ENCODE measurements at regions of chr21 and their contacts with region 1.

Region 1: GRCh38 chr21:33441489-33442477 is 38.0 kb downstream of the TMEM50B start:
- DNase-seq: no peak
- ATAC-seq: no peak
- H3K4me3 ChIP-seq: no peak overlapping the region
- H3K4me3 Mint-ChIP-seq: no peak overlapping the region
- H3K27ac ChIP-seq: no peak overlapping the region
- H3K27ac Mint-ChIP-seq: no peak overlapping the region
- H3K4me1 ChIP-seq: no peaks in the 10 kb centered on the region
- H3K4me1 Mint-ChIP-seq: peaks cover 4 to 16% (median 7%) of the 10 kb centered on the region in 3 donors
- H3K27me3 ChIP-seq: no peaks in the 10 kb centered on the region
- H3K27me3 Mint-ChIP-seq: no peaks in the 10 kb centered on the region

Region 2: DNA sequence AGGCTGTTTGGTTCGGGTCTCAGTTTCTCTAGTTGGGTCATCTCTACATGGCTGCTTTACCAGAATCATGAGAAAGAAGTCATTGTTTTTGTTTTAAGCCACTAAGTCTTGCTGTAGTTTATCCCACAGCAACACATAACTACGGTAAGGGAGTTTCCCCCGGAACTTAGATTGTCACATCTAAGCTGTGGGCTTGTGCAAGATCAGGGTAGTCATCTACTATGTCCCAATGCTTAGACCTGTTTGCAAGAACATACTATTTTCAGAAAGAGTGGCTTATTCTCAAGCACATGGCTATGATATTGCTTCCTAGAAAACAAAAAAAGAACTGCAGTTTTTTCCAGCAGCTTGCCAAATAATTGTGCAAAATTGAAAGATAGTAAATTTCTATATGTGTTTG is 434.0 kb before region 1 on chr21:
- CTCF ChIA-PET with region 1: interaction called in 1 of 2 experiments, 11 read pairs
- POLR2A ChIA-PET with region 1: interaction called in 1 of 2 experiments, 7 read pairs
- DNase-seq: no peak
- ATAC-seq: no peak
- H3K4me3 ChIP-seq: no peak overlapping the region
- H3K4me3 Mint-ChIP-seq: no peak overlapping the region
- H3K27ac ChIP-seq: no peak overlapping the region
- H3K27ac Mint-ChIP-seq: no peak overlapping the region
- H3K4me1 ChIP-seq: no peaks in the 10 kb centered on the region
- H3K4me1 Mint-ChIP-seq: no peaks in the 10 kb centered on the region
- H3K27me3 ChIP-seq: peaks cover 0 to 20% of the 10 kb centered on the region in 2 experiments
- H3K27me3 Mint-ChIP-seq: peaks cover 15 to 25% of the 10 kb centered on the region in 2 donors

Region 3: GRCh38 chr21:33199516-33200217 is 242.1 kb before region 1 on chr21:
- CTCF ChIA-PET with region 1: interaction called, 10 to 45 read pairs
- POLR2A ChIA-PET with region 1: no interaction called
- DNase-seq: peak; percentile 47 to 93 (median 79)
- ATAC-seq: peak; percentile 85 to 94 (median 92)
- H3K4me3 ChIP-seq: no peak overlapping the region
- H3K4me3 Mint-ChIP-seq: no peak overlapping the region
- H3K27ac ChIP-seq: peak overlapping the region; percentile 8
- H3K27ac Mint-ChIP-seq: peak overlapping the region; percentile 48 to 57
- H3K4me1 ChIP-seq: peaks cover 6 to 15% of the 10 kb centered on the region in 2 experiments
- H3K4me1 Mint-ChIP-seq: peaks cover 41 to 60% (median 46%) of the 10 kb centered on the region in 3 donors
- H3K27me3 ChIP-seq: peaks cover 0 to 3% of the 10 kb centered on the region in 2 experiments
- H3K27me3 Mint-ChIP-seq: peaks cover 0 to 5% of the 10 kb centered on the region in 2 donors

Region 4: GRCh38 chr21:33212159-33212851 is 229.5 kb before region 1 on chr21:
- CTCF ChIA-PET with region 1: interaction called in 1 of 2 experiments, 10 read pairs
- POLR2A ChIA-PET with region 1: no interaction called
- DNase-seq: peak in 8 of 35 experiments; percentile 16 to 49 (median 31)
- ATAC-seq: peak; percentile 36 to 62 (median 43)
- H3K4me3 ChIP-seq: no peak overlapping the region
- H3K4me3 Mint-ChIP-seq: peak overlapping the region; percentile 39 to 61 (median 46)
- H3K27ac ChIP-seq: peak overlapping the region; percentile 45
- H3K27ac Mint-ChIP-seq: peak overlapping the region; percentile 92 to 95
- H3K4me1 ChIP-seq: peaks cover 60 to 69% of the 10 kb centered on the region in 2 experiments
- H3K4me1 Mint-ChIP-seq: peaks cover 84 to 87% (median 84%) of the 10 kb centered on the region in 3 donors
- H3K27me3 ChIP-seq: no peaks in the 10 kb centered on the region
- H3K27me3 Mint-ChIP-seq: no peaks in the 10 kb centered on the region

Region 5: DNA sequence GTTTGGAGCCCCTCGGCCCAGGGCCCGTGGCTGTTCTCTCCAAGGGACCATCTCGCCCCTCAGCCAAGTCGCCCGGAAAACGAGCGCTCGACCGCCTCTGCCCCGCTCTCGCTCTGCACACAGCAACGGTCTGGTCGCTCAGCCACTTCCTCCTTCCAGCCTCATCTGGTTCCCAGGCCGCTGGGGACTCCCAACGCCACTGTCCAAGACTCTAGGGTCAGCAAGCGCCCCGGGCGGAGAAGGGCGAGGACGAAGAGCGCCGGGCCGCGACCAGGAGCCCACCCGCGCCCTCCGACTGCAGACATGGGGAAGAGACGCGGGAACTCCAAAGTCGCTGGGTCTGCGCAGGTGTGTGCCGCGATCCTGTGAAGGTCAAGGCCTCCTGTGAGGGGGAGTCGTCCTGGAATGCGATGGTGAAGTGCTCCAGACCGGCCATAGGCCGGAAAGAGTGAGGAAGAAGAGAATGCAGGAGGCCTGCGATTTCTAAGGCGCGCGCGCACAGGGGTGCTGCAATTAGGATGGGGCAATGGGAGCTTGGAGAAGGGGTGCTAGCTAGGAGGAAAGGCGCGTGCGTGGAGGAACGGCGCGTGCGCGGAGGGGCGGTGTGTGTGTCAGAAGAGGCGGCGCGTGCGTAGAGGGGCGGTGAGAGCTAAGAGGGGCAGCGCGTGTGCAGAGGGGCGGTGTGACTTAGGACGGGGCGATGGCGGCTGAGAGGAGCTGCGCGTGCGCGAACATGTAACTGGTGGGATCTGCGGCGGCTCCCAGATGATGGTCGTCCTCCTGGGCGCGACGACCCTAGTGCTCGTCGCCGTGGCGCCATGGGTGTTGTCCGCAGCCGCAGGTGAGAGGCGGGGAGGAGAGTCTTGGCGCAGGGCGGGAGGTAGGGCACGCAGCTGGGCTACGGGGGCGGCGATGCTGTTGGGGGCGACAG is 117.2 kb before region 1 on chr21 and contains the start of gene IFNAR1:
- CTCF ChIA-PET with region 1: interaction called, 6 to 11 read pairs
- POLR2A ChIA-PET with region 1: no interaction called
- DNase-seq: peak; percentile 94 to 100 (median 98)
- ATAC-seq: peak; percentile 88 to 94 (median 91)
- H3K4me3 ChIP-seq: peak within 1 kb of the TSS; percentile 67 to 97
- H3K4me3 Mint-ChIP-seq: no peak within 1 kb of the TSS
- H3K27ac ChIP-seq: peak within 1 kb of the TSS; percentile 92
- H3K27ac Mint-ChIP-seq: no peak within 1 kb of the TSS
- H3K4me1 ChIP-seq: peaks cover 19 to 23% of the 10 kb centered on the region in 2 experiments
- H3K4me1 Mint-ChIP-seq: peaks cover 29 to 32% (median 30%) of the 10 kb centered on the region in 3 donors
- H3K27me3 ChIP-seq: no peaks in the 10 kb centered on the region
- H3K27me3 Mint-ChIP-seq: no peaks in the 10 kb centered on the region
- total RNA-seq, gene IFNAR1: 22.1 to 51.1 (median 45.6) TPM

Region 6: GRCh38 chr21:33348706-33349105 is 93.1 kb before region 1 on chr21:
- CTCF ChIA-PET with region 1: interaction called, 6 to 10 read pairs
- POLR2A ChIA-PET with region 1: interaction called in 1 of 2 experiments, 4 read pairs
- DNase-seq: no peak
- ATAC-seq: no peak
- H3K4me3 ChIP-seq: no peak overlapping the region
- H3K4me3 Mint-ChIP-seq: no peak overlapping the region
- H3K27ac ChIP-seq: no peak overlapping the region
- H3K27ac Mint-ChIP-seq: peak overlapping the region in 1 of 2 donors; percentile 28
- H3K4me1 ChIP-seq: peaks cover 6 to 11% of the 10 kb centered on the region in 2 experiments
- H3K4me1 Mint-ChIP-seq: peaks cover 19 to 30% (median 24%) of the 10 kb centered on the region in 3 donors
- H3K27me3 ChIP-seq: no peaks in the 10 kb centered on the region
- H3K27me3 Mint-ChIP-seq: no peaks in the 10 kb centered on the region

Region 7: GRCh38 chr21:33479679-33480480 is 38.1 kb after region 1 on chr21 and contains the start of gene TMEM50B:
- CTCF ChIA-PET with region 1: interaction called in 1 of 2 experiments, 11 read pairs
- POLR2A ChIA-PET with region 1: no interaction called
- DNase-seq: peak; percentile 83 to 98 (median 93)
- ATAC-seq: peak; percentile 90 to 93 (median 91)
- H3K4me3 ChIP-seq: peak within 1 kb of the TSS; percentile 84 to 86
- H3K4me3 Mint-ChIP-seq: peak within 1 kb of the TSS; percentile 91 to 92 (median 91)
- H3K27ac ChIP-seq: peak within 1 kb of the TSS; percentile 73
- H3K27ac Mint-ChIP-seq: peak within 1 kb of the TSS; percentile 95 to 96
- H3K4me1 ChIP-seq: peaks cover 9 to 20% of the 10 kb centered on the region in 2 experiments
- H3K4me1 Mint-ChIP-seq: peaks cover 16 to 28% (median 23%) of the 10 kb centered on the region in 3 donors
- H3K27me3 ChIP-seq: no peaks in the 10 kb centered on the region
- H3K27me3 Mint-ChIP-seq: no peaks in the 10 kb centered on the region
- total RNA-seq, gene TMEM50B: 47.0 to 98.9 (median 73.4) TPM

Measured in T-cell (primary cell).